Left ventricle myocardium inferior (tissue), 1 donor: ENCODE measurements at regions of chr3 and their contacts with region 1.

Region 1: GRCh38 chr3:151146071-151146730 is 56.8 kb downstream of the GPR171 start:
- DNase-seq: peak; percentile 60
- H3K4me3 ChIP-seq: peak overlapping the region; percentile 3
- H3K27ac ChIP-seq: no peak overlapping the region
- H3K4me1 ChIP-seq: peaks cover 12% of the 10 kb centered on the region
- H3K27me3 ChIP-seq: peaks cover 22% of the 10 kb centered on the region
- CTCF ChIP-seq: peak; percentile 91

Region 2: GRCh38 chr3:150721285-150722130 is 424.7 kb before region 1 on chr3:
- intact Hi-C with region 1: loop called (anchors 10 kb)
- DNase-seq: no peak
- H3K4me3 ChIP-seq: peak overlapping the region; percentile 17
- H3K27ac ChIP-seq: no peak overlapping the region
- H3K4me1 ChIP-seq: peaks cover 5% of the 10 kb centered on the region
- H3K27me3 ChIP-seq: no peaks in the 10 kb centered on the region
- CTCF ChIP-seq: peak; percentile 89

Region 3: DNA sequence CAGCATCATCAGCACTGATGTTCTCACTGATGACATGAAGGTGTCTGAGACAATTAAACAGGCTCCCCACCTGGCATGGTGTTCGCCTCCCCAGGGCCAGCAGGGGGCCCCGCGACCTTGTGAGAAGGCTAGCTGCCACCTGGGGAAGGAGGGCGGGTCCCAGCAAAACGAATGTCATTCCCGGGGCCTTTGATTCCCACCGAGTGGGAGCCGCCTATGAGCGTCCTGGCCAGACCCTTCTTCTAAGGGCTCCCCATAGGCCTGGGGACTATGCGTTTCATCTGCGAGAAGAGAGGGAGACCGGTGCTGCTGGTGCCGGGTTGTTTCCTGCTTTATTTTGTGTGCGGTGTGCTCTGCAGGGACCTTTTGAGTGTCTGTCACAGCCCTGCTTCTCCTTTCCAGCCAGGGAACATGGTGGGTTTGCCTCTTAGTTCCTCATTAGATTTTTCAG is 220.4 kb before region 1 on chr3:
- intact Hi-C with region 1: loop called (anchors 10 kb)
- DNase-seq: peak; percentile 30
- H3K4me3 ChIP-seq: peak overlapping the region; percentile 22
- H3K27ac ChIP-seq: no peak overlapping the region
- H3K4me1 ChIP-seq: no peaks in the 10 kb centered on the region
- H3K27me3 ChIP-seq: peaks cover 15% of the 10 kb centered on the region
- CTCF ChIP-seq: peak; percentile 57

Region 4: DNA sequence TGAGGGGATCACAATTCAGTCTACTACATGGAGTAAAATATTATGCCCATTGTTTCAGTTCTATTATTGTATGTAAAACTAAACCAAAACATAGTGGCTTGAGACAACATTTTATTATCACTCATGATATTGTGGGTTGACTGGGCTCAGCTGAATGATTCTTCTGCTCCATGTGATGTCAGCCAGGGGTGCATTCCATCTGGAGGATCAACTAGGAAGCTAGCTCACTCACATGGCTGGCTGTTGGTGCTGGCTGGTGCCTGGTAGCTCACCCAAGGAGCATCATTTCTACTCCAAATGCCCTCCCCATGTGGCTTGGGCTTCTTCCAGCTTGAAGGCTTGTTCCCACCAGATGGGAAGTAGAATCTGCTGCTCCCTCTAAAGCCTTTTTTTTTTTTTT is 121.9 kb before region 1 on chr3:
- intact Hi-C with region 1: no loop called
- DNase-seq: no peak
- H3K4me3 ChIP-seq: no peak overlapping the region
- H3K27ac ChIP-seq: no peak overlapping the region
- H3K4me1 ChIP-seq: no peaks in the 10 kb centered on the region
- H3K27me3 ChIP-seq: peaks cover 7% of the 10 kb centered on the region
- CTCF ChIP-seq: no peak